Left ventricle myocardium superior (tissue), 1 donor: ENCODE measurements at regions of chr13 and their contacts with region 1.

Region 1: DNA sequence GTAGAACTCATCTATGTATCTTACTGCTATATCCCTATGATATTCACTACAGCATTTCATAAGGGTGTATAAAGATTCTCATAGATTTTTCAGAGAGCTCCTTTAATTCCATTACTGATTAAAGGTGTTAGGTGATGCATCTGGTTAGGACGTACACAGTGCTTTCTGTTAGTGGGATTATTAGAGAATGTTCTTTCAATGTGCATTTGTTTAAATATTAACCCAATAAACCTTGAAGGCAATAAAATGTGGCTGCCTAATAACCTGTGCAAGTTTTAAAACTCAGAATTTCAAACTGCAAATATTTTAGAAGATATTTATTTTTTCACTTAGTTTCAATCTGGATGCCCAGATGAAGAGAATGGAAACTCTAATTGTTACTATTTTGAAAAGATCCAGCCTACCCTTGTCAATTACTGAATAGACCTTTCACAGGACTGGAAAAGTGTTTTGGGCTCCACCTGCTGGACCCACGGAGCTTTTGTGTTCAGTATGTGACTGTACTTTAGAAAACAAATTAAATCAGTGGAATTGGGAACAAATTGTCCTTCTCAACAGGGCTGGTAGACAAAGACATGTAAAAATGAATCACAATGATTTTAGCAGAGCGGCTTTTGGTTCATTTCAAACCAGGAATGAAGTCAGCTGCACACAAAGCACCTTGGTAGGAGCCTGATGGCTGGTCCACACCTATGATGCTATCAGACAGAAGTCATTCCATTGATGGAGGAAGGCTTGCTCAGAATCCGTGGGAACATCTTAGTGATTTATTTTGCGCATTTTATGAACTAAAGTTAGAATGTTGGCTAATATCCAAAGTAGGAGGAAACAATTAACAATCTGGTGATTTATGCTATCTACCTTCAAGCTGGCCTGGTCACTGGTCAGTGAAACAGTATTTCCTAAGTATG is 89.4 kb upstream of the RAP2A start:
- DNase-seq: peak; percentile 77
- ATAC-seq: peak; percentile 81

Region 2: GRCh38 chr13:97116754-97117153 is 227.8 kb before region 1 on chr13:
- intact Hi-C with region 1: loop called (anchors 5 kb)
- DNase-seq: no peak
- ATAC-seq: peak; percentile 90

Region 3: GRCh38 chr13:97221989-97222700 is 122.4 kb before region 1 on chr13 and contains the start of gene MBNL2:
- intact Hi-C with region 1: loop called (anchors 5 kb)
- DNase-seq: peak; percentile 90
- ATAC-seq: peak; percentile 93
- total RNA-seq, gene MBNL2: 66.7 TPM